ENCODE measurements at regions of chr4 and their contacts with region 1.

Region 1: DNA sequence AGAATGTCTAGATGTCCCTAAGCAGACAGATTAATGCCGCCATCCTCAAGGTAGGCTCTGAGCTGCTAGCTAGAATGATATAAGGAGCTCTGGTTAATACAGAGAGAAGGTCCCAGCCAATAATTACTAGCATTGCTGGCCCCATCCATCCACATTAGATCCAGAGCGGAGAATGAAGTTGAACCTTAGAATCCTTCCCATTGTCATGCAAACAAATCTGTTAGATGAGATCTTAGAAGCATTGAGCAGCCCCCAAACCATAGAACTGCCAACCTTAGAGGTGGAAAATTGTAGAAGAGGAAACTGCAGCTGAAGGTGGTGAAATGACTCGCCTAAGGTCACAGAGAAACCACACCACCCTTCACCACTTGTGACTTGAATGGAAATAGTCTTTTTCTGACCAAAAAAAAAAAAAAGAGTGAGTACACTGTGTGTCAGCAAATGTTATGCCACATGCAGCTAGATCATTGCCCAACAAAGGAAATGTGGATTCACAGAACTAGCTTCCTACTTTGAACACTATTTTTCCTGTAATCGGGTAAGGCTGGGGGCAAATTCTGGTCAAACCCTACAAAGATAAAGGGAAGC is 162.1 kb downstream of the SMIM20 start:
- DNase-seq: peak; percentile 81
- H3K4me3 Mint-ChIP-seq: peak overlapping the region; percentile 34
- H3K27ac Mint-ChIP-seq: peak overlapping the region; percentile 96
- H3K4me1 Mint-ChIP-seq: peaks cover 87% of the 10 kb centered on the region
- H3K27me3 Mint-ChIP-seq: no peaks in the 10 kb centered on the region

Region 2: GRCh38 chr4:25702848-25703247 is 373.2 kb before region 1 on chr4:
- CTCF ChIA-PET with region 1: no interaction called
- POLR2A ChIA-PET with region 1: no interaction called
- intact Hi-C with region 1: no loop called
- DNase-seq: no peak
- H3K4me3 Mint-ChIP-seq: no peak overlapping the region
- H3K27ac Mint-ChIP-seq: no peak overlapping the region
- H3K4me1 Mint-ChIP-seq: no peaks in the 10 kb centered on the region
- H3K27me3 Mint-ChIP-seq: no peaks in the 10 kb centered on the region

Region 3: DNA sequence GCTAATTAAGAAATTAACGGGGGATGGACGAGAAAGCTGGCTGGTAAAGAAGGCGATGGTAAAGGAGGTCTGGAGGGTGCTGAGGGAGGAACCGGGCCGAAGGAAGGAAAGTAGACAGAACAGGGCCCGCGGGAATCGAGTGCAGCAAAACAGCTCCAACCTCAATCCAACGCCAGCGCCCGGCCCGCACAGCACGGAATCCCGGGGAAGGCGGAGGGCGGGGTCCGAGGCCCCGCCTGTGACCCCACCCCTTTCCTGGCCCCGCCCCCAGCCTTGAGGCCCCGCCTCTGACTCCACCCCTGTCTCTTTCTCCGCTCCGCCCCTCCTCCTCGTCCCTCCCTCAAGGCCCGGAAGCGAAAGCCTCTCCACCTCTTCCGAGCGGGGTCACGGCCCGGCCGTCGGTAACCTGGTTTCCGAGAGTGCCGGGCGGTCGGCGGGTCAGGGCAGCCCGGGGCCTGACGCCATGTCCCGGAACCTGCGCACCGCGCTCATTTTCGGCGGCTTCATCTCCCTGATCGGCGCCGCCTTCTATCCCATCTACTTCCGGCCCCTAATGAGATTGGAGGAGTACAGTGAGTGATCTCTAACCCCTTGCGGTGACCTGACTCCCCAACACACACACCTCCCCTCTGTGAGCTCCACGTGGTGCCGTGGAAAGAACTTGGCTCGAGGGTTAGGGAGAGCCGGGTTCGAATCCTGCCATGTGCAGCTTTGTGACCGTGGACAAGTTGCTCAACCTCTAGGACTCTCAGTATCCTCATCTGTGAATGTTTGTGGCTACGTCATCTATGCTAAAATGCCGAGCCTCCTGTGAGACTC is 162.0 kb before region 1 on chr4 and contains the start of gene SMIM20:
- CTCF ChIA-PET with region 1: no interaction called
- POLR2A ChIA-PET with region 1: interaction called, 4 read pairs
- intact Hi-C with region 1: loop called (anchors 1 kb)
- DNase-seq: peak; percentile 93
- H3K4me3 Mint-ChIP-seq: peak within 1 kb of the TSS; percentile 87
- H3K27ac Mint-ChIP-seq: peak within 1 kb of the TSS; percentile 94
- H3K4me1 Mint-ChIP-seq: peaks cover 17% of the 10 kb centered on the region
- H3K27me3 Mint-ChIP-seq: no peaks in the 10 kb centered on the region
- total RNA-seq, gene SMIM20: 26.0 to 28.0 TPM

Region 4: DNA sequence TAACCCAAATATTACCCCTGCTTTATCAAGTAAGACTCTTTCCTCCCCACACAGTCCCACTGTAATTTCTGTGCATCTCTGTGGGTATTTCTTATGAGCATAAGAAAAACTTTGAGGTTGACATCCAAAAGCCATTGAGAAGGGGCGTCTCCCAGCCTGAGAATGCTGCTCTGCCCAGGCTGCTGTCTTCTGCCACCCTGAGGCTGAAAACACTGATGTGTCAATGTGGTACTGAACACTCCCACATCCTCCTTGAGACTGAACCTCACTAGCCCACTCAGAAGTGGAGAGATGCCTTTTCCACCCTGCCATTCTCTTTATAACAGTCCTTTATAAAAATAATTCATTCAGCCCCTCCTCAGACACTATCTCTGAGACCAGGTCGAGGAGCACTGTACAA is 41.2 kb before region 1 on chr4:
- CTCF ChIA-PET with region 1: interaction called, 3 read pairs
- POLR2A ChIA-PET with region 1: interaction called, 4 read pairs
- intact Hi-C with region 1: loop called (anchors 2 kb)
- DNase-seq: peak; percentile 67
- H3K4me3 Mint-ChIP-seq: no peak overlapping the region
- H3K27ac Mint-ChIP-seq: no peak overlapping the region
- H3K4me1 Mint-ChIP-seq: peaks cover 30% of the 10 kb centered on the region
- H3K27me3 Mint-ChIP-seq: peaks cover 2% of the 10 kb centered on the region

Region 5: DNA sequence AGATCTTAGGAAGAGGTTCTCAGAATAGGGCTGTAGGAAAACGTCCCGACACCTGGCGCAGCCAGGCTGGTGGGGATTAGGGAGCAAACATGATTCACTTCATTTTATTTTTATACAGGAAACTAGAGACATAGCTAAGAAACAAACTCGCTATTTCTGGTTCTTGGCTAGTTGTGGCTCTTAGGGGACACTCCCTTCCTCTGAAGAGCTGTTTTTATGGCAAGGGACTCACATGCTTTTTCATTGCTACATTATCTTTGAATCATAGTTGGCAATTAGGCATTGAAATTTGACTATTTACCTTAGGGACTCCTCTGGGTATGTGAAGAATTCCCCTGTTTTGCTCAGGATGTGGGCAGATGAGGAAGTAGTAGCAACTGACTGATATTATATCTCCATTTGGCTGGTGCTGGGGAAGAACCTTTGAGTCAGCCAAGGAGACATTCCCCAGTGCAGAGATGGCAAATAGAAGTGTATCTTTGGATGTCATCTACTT is 12.4 kb after region 1 on chr4:
- CTCF ChIA-PET with region 1: interaction called, 29 read pairs
- POLR2A ChIA-PET with region 1: interaction called, 42 read pairs
- intact Hi-C with region 1: loop called (anchors 1 kb)
- DNase-seq: peak; percentile 59
- H3K4me3 Mint-ChIP-seq: peak overlapping the region; percentile 62
- H3K27ac Mint-ChIP-seq: peak overlapping the region; percentile 94
- H3K4me1 Mint-ChIP-seq: peaks cover 61% of the 10 kb centered on the region
- H3K27me3 Mint-ChIP-seq: no peaks in the 10 kb centered on the region

Region 6: DNA sequence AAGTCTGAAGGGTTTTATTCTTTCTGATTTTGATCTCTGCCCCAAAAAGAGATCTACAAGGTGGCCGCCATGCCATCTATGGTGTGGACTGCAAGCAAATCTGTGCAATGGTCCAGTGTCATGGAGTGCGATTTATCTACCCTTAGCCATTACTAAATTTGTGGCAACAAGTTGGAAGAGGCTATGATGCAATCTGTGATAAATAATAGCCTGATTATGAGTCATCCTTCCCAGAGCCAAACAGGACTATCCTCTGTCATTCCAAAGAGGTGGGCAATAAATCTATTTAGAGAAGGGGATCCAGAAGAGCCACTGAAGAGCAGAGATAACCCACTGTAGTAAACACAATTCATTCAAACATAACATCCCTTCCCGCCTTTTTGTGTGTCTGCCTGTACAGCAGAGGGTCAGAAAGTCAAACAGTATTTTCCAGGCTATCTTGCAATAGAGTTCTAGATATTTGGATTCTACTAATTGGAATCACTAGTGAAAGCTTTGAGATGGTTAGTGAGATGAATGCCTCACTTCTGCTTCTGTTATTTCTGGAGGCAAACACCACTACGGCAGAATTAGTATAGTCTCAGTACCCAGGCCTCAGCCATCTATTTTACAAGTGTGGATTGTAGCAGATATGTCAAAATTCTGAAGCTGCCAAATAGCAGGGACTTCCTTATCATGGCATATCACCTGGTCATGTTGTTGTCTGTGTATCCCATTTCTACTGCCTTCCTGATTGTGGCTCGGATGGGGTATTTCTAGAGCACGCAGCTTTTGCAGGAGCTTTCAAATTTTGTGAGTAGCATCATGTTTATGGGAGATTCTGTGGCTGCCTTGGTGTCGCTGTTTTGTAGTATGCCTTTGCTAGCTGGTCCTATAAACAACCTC is 30.0 kb after region 1 on chr4:
- CTCF ChIA-PET with region 1: no interaction called
- POLR2A ChIA-PET with region 1: no interaction called
- intact Hi-C with region 1: no loop called
- DNase-seq: no peak
- H3K4me3 Mint-ChIP-seq: no peak overlapping the region
- H3K27ac Mint-ChIP-seq: no peak overlapping the region
- H3K4me1 Mint-ChIP-seq: peaks cover 7% of the 10 kb centered on the region
- H3K27me3 Mint-ChIP-seq: no peaks in the 10 kb centered on the region

Region 7: DNA sequence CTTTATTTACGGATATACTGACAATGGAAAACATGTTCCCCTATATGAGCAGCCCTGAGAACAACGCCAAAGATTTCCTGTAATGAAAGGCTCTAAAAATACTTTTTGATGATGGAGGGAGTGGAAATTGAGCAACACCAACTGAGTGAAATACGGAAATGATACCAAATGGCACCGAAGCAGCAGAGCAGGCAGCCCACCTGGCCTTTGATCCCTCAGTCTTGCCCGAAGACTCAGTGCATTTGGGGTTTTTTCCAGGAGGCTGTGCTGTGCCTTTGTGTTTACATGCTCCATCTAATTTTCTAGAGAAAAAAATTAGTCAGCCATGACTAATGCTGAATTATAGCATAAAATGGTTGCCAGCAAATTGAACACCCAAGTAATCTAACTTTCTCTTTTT is 74.9 kb after region 1 on chr4:
- CTCF ChIA-PET with region 1: interaction called, 6 read pairs
- POLR2A ChIA-PET with region 1: interaction called, 6 read pairs
- intact Hi-C with region 1: loop called (anchors 1 kb)
- DNase-seq: peak; percentile 79
- H3K4me3 Mint-ChIP-seq: no peak overlapping the region
- H3K27ac Mint-ChIP-seq: peak overlapping the region; percentile 87
- H3K4me1 Mint-ChIP-seq: peaks cover 47% of the 10 kb centered on the region
- H3K27me3 Mint-ChIP-seq: no peaks in the 10 kb centered on the region

Region 8: GRCh38 chr4:26288355-26288909 is 212.3 kb after region 1 on chr4:
- CTCF ChIA-PET with region 1: no interaction called
- POLR2A ChIA-PET with region 1: no interaction called
- intact Hi-C with region 1: loop called (anchors 1 kb)
- DNase-seq: peak; percentile 74
- H3K4me3 Mint-ChIP-seq: no peak overlapping the region
- H3K27ac Mint-ChIP-seq: peak overlapping the region; percentile 66
- H3K4me1 Mint-ChIP-seq: peaks cover 25% of the 10 kb centered on the region
- H3K27me3 Mint-ChIP-seq: no peaks in the 10 kb centered on the region